Upper lobe of right lung (tissue), 1 donor: ENCODE measurements at regions of chr7 and their contacts with region 1.

Region 1: GRCh38 chr7:31744294-31744874 is 57.4 kb downstream of the PPP1R17 start:
- DNase-seq: no peak
- ATAC-seq: peak; percentile 86
- H3K4me3 ChIP-seq: no peak overlapping the region
- H3K27ac ChIP-seq: no peak overlapping the region
- H3K4me1 ChIP-seq: no peaks in the 10 kb centered on the region
- H3K27me3 ChIP-seq: no peaks in the 10 kb centered on the region
- CTCF ChIP-seq: peak; percentile 86

Region 2: GRCh38 chr7:32204361-32205018 is 460.1 kb after region 1 on chr7:
- intact Hi-C with region 1: loop called (anchors 10 kb)
- DNase-seq: no peak
- ATAC-seq: peak; percentile 81
- H3K4me3 ChIP-seq: peak overlapping the region; percentile 23
- H3K27ac ChIP-seq: no peak overlapping the region
- H3K4me1 ChIP-seq: no peaks in the 10 kb centered on the region
- H3K27me3 ChIP-seq: no peaks in the 10 kb centered on the region
- CTCF ChIP-seq: peak; percentile 65